Naive thymus-derived CD4-positive, alpha-beta T cell (primary cell): ENCODE measurements at regions of chr16 and their contacts with region 1.

Region 1: GRCh38 chr16:3023669-3024478 is at the starts of genes HCFC1R1 and THOC6:
- DNase-seq: peak; percentile 86 to 96 (median 96)
- ATAC-seq: peak; percentile 89
- H3K4me3 ChIP-seq: peak within 1 kb of the TSS; percentile 87
- H3K4me3 Mint-ChIP-seq: peak within 1 kb of the TSS; percentile 78 to 98 (median 92)
- H3K27ac ChIP-seq: peak within 1 kb of the TSS; percentile 98
- H3K27ac Mint-ChIP-seq: peak within 1 kb of the TSS; percentile 85 to 99 (median 96)
- H3K4me1 ChIP-seq: peaks cover 42 to 50% of the 10 kb centered on the region in 2 donors
- H3K4me1 Mint-ChIP-seq: peaks cover 15 to 62% (median 50%) of the 10 kb centered on the region in 7 donors
- H3K27me3 ChIP-seq: peaks cover 0 to under 1% of the 10 kb centered on the region in 2 donors
- H3K27me3 Mint-ChIP-seq: peaks cover 0 to 5% (median 2%) of the 10 kb centered on the region in 5 donors
- total RNA-seq, gene HCFC1R1: 11.5 to 29.6 (median 14.9) TPM
- total RNA-seq, gene THOC6: 25.3 to 55.5 (median 26.0) TPM

Region 2: DNA sequence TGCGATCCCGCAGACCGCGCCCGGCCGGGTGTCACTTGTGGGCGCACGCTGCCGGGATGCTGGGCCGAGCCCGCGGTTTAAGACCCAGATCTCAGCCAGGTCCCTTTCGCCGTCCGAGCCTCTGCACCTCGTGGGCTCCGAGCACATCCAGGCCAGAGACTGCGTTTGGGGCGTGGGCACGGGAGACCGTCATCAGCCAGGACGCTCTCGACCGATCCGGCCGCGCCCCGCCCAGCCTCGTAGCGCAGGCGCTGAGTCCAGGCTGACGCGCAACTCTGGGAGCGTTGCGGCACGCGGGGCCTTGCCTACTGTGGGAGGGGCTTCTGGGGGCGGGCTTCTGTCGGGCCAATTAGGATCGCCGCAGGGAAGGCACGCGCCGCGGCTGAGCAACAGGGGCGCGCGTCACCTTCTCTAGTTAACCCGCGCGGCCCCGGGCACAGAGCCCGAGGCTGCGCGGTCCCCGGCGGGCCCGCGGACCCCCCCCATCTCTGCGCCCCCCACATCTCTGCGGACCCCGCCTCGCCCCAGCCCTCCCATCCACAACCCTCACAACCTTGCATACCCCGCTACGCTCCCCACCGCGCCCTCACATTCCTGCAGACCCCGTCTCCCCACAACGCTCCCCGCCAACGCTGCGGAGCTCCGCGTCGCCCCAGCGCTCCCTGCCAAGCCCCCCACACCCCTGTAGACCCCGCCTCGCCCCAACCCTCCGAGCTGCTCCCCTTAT is 491.9 kb before region 1 on chr16:
- CTCF ChIA-PET with region 1: no interaction called
- POLR2A ChIA-PET with region 1: no interaction called
- intact Hi-C with region 1: loop called in 1 of 2 experiments (anchors 10 kb)
- DNase-seq: peak; percentile 94 to 97 (median 96)
- ATAC-seq: peak; percentile 93
- H3K4me3 ChIP-seq: peak overlapping the region; percentile 71
- H3K4me3 Mint-ChIP-seq: peak overlapping the region; percentile 84 to 100 (median 96)
- H3K27ac ChIP-seq: peak overlapping the region; percentile 93
- H3K27ac Mint-ChIP-seq: peak overlapping the region; percentile 96 to 100 (median 98)
- H3K4me1 ChIP-seq: peaks cover 5 to 7% of the 10 kb centered on the region in 2 donors
- H3K4me1 Mint-ChIP-seq: peaks cover 0 to 31% (median 20%) of the 10 kb centered on the region in 7 donors
- H3K27me3 ChIP-seq: no peaks in the 10 kb centered on the region
- H3K27me3 Mint-ChIP-seq: no peaks in the 10 kb centered on the region

Region 3: DNA sequence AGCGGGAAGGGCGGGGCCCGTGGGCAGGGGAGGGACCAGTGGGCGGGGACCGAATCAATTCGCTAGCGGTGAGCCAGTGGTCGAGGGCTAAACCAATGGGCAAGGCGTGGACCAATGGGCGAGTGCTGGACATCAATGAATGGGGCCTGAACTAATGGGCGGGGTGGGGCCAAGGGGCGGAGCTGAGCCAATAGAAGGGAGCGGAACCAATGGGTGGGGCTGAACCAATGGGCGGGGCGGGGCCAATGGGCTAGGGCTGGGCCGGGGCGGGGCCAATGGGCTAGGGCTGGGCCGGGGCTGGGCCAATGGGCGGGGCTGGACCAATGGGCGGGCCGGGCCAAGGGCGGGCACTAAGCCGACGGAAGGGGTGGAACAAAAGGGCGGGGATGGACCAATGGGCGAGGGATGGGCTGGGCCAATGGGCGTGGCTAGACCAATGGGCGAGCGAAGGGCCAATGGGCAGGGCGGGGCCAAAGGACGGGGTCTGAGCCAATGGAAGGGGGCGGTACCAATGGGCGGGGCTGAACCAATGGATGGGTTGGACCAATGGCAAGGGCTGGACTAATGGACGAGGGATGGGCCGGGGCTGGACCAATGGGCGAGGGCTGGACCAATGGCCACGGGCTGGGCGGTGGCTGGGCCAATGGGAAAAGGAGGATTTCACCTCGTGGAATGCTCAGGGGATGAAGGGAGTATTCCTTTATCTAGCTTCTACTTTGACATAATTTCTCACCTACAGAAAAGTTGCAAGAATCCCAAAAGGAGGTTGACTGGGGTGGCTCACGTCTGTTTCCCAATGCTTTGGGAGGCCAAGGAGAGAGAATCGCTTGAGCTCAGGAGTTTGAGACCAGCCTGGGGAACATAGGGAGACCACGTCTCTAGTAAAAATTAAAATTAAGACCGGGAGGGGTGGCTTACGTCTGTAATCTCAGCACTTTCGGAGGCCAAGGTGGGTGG is 118.2 kb before region 1 on chr16:
- CTCF ChIA-PET with region 1: no interaction called
- POLR2A ChIA-PET with region 1: no interaction called
- intact Hi-C with region 1: loop called (anchors 2 to 5 kb)
- DNase-seq: peak; percentile 75 to 98 (median 78)
- ATAC-seq: peak; percentile 91
- H3K4me3 ChIP-seq: peak overlapping the region; percentile 70
- H3K4me3 Mint-ChIP-seq: peak overlapping the region; percentile 89 to 98 (median 92)
- H3K27ac ChIP-seq: peak overlapping the region; percentile 62
- H3K27ac Mint-ChIP-seq: peak overlapping the region in 7 of 9 donors; percentile 14 to 88 (median 74)
- H3K4me1 ChIP-seq: peaks cover 7 to 12% of the 10 kb centered on the region in 2 donors
- H3K4me1 Mint-ChIP-seq: peaks cover 12 to 35% (median 28%) of the 10 kb centered on the region in 7 donors
- H3K27me3 ChIP-seq: no peaks in the 10 kb centered on the region
- H3K27me3 Mint-ChIP-seq: peaks cover 0 to 8% (median 0%) of the 10 kb centered on the region in 5 donors

Region 4: GRCh38 chr16:2980227-2981086 is 43.4 kb before region 1 on chr16 and contains the start of gene PKMYT1:
- CTCF ChIA-PET with region 1: no interaction called
- POLR2A ChIA-PET with region 1: interaction called, 3 read pairs
- intact Hi-C with region 1: loop called in 1 of 2 experiments (anchors 1 kb)
- DNase-seq: peak; percentile 86 to 100 (median 96)
- ATAC-seq: peak; percentile 97
- H3K4me3 ChIP-seq: peak within 1 kb of the TSS; percentile 73
- H3K4me3 Mint-ChIP-seq: peak within 1 kb of the TSS; percentile 72 to 91 (median 82)
- H3K27ac ChIP-seq: peak within 1 kb of the TSS; percentile 94
- H3K27ac Mint-ChIP-seq: peak within 1 kb of the TSS in 8 of 9 donors; percentile 65 to 89 (median 78)
- H3K4me1 ChIP-seq: peaks cover 5 to 6% of the 10 kb centered on the region in 2 donors
- H3K4me1 Mint-ChIP-seq: peaks cover 9 to 29% (median 14%) of the 10 kb centered on the region in 7 donors
- H3K27me3 ChIP-seq: no peaks in the 10 kb centered on the region
- H3K27me3 Mint-ChIP-seq: peaks cover 0 to 2% (median 0%) of the 10 kb centered on the region in 5 donors
- total RNA-seq, gene PKMYT1: 0.93 to 89.1 TPM in 2 of 5 experiments, not detected in the others

Region 5: DNA sequence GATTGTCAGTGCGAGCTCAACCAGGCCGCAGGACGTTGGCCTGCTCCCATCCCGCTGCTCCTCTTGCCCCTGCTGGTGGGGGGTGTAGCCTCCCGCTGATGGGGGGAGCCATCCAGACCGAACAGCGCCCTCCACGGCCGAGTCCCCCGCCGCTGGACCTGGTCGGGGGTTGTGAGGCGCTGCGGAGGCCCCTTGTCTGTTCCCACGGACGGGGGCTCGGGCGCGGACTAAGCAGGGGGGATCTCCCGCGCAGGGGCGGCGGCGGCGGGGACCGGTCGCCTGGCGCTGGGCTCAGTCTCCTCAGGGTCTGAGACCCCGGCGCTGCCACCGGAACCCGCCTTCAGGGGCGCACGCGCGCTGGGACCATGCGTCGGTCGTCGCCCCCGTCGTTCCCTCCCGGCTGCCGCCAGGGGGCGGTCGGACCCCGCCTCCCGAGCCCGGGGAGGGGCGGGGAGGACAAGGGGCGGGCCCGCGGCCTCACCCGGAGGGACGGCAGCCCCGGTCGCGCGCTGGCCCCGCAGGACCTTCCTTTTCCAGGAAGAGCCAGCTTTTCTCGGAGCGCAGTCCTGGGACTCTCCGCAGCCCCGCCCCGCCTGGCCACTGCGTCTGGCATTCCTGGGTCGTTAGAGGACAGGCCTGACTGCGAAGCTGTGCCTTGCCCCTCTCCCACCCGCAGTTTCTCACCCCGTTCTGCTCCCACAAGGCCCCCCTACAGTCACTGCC is 35.3 kb after region 1 on chr16:
- CTCF ChIA-PET with region 1: interaction called, 12 read pairs
- POLR2A ChIA-PET with region 1: interaction called, 4 read pairs
- intact Hi-C with region 1: no loop called
- DNase-seq: peak; percentile 76 to 97 (median 89)
- ATAC-seq: peak; percentile 95
- H3K4me3 ChIP-seq: peak overlapping the region; percentile 77
- H3K4me3 Mint-ChIP-seq: peak overlapping the region; percentile 79 to 95 (median 88)
- H3K27ac ChIP-seq: peak overlapping the region; percentile 89
- H3K27ac Mint-ChIP-seq: peak overlapping the region in 8 of 9 donors; percentile 72 to 91 (median 85)
- H3K4me1 ChIP-seq: peaks cover 25 to 46% of the 10 kb centered on the region in 2 donors
- H3K4me1 Mint-ChIP-seq: peaks cover 39 to 63% (median 47%) of the 10 kb centered on the region in 7 donors
- H3K27me3 ChIP-seq: no peaks in the 10 kb centered on the region
- H3K27me3 Mint-ChIP-seq: no peaks in the 10 kb centered on the region

Region 6: GRCh38 chr16:3129137-3130131 is 105.6 kb after region 1 on chr16:
- CTCF ChIA-PET with region 1: interaction called, 98 read pairs
- POLR2A ChIA-PET with region 1: interaction called, 10 read pairs
- intact Hi-C with region 1: loop called in 1 of 2 experiments (anchors 1 kb)
- DNase-seq: peak; percentile 53 to 92 (median 88)
- ATAC-seq: peak; percentile 91
- H3K4me3 ChIP-seq: peak overlapping the region; percentile 69
- H3K4me3 Mint-ChIP-seq: peak overlapping the region; percentile 73 to 97 (median 93)
- H3K27ac ChIP-seq: peak overlapping the region; percentile 72
- H3K27ac Mint-ChIP-seq: peak overlapping the region; percentile 38 to 96 (median 85)
- H3K4me1 ChIP-seq: peaks cover 27 to 36% of the 10 kb centered on the region in 2 donors
- H3K4me1 Mint-ChIP-seq: peaks cover 22 to 67% (median 55%) of the 10 kb centered on the region in 7 donors
- H3K27me3 ChIP-seq: no peaks in the 10 kb centered on the region
- H3K27me3 Mint-ChIP-seq: no peaks in the 10 kb centered on the region

Region 7: DNA sequence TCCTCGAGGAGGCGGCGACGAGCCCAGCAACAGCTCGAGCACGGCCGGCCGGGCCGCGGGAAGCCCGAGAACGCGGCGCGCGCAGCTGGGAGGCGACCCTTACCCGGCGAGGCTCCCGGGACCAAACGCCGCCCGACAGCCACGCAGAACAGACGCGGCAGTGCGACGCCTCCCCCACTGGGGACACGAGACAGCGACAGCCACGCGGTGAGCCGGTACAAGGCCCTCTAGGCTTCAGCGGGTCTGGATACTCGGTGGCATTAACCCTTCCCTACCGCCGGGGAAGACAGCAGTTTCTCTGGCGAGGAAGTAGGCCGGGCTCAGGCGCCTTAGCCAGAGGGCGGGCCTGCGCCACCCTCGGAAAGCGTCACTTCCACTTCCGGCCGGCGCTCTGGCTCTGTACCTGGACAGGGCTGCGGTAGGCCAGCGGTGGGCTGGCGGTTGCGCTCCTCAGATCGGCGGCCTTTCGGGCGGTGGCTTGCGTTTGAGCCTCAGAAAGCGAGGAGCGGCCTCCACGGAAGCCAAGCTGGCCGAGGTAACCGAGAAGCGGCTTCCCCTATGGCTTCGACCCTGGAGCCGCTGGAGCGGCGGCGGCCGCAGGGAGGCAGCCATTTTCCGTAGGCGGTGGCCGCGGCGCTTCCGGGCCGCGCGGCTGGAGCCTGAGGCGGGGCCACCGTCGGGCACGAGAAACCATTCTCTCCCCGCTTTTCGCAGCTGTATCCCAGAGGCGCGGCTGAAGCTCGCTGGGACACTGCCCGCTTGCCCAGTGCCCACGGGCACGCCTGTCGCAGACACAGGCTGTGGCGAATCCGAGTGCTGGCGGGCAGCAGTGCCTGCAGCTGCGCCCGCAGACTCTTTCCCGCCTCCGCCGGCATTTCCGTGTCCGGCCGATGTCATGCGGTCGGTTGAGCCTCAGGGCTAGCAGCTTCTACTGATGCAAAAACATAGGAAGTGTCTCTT is 281.5 kb after region 1 on chr16 and contains the starts of genes TIGD7 and ZNF75A:
- CTCF ChIA-PET with region 1: no interaction called
- POLR2A ChIA-PET with region 1: no interaction called
- intact Hi-C with region 1: no loop called
- DNase-seq: peak; percentile 69 to 89 (median 85)
- ATAC-seq: peak; percentile 96
- H3K4me3 ChIP-seq: peak within 1 kb of the TSS; percentile 78
- H3K4me3 Mint-ChIP-seq: peak within 1 kb of the TSS; percentile 78 to 87 (median 84)
- H3K27ac ChIP-seq: peak within 1 kb of the TSS; percentile 87
- H3K27ac Mint-ChIP-seq: peak within 1 kb of the TSS; percentile 62 to 92 (median 83)
- H3K4me1 ChIP-seq: peaks cover 12 to 13% of the 10 kb centered on the region in 2 donors
- H3K4me1 Mint-ChIP-seq: peaks cover 4 to 38% (median 19%) of the 10 kb centered on the region in 7 donors
- H3K27me3 ChIP-seq: no peaks in the 10 kb centered on the region
- H3K27me3 Mint-ChIP-seq: no peaks in the 10 kb centered on the region
- total RNA-seq, gene TIGD7: 4.9 to 18.4 (median 5.5) TPM
- total RNA-seq, gene ZNF75A: 27.7 to 90.6 (median 53.4) TPM

Region 8: DNA sequence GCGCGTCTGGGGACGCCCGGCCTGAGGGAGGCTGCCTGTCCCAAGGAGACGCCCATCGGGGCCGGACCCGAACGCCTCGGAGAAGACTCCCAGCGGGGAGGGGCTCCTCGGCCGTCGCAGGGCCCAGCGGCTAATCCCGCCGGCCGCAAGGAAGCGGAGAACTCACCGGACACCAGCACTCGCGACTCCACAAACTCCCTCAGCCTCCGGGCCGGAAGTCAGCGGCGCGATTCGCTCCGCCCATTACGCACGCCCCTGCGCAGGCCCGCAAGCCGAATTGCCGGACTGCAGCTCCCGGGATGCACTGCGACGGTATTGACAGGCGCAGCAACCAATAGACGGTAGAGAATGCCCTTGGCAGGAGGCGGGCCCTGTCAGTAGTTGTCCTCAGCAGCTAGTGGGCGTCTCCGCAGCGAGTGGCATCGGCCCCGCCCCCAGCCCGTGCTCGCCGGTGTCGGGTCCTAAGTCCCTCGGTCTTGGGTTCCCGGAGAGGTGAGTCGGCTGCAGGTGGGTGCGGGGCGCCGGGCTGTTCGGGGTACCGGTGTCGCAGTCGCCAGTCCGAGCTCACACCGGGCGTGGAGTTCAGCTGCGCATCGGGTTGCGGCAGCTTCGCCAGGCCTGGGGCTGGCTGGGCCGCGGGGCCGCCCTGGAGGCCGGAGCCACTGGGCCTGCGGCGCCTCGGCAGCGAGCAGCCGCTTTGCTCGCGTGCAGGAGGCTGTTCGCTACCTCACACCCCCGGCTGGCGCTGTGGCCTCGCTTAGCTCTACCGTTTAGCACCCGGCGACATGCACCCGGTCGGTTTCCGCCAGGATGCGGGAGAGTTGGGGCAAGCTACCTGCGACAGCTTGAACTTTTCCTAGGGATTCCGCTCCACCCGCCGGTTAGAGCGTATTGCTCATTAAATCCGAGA is 377.2 kb after region 1 on chr16 and contains the starts of genes ZNF174 and ZSCAN32:
- CTCF ChIA-PET with region 1: no interaction called
- POLR2A ChIA-PET with region 1: no interaction called
- intact Hi-C with region 1: loop called in 1 of 2 experiments (anchors 5 kb)
- DNase-seq: peak; percentile 90 to 99 (median 98)
- ATAC-seq: peak; percentile 99
- H3K4me3 ChIP-seq: peak within 1 kb of the TSS; percentile 87
- H3K4me3 Mint-ChIP-seq: peak within 1 kb of the TSS; percentile 84 to 97 (median 94)
- H3K27ac ChIP-seq: peak within 1 kb of the TSS; percentile 89
- H3K27ac Mint-ChIP-seq: peak within 1 kb of the TSS; percentile 88 to 95 (median 91)
- H3K4me1 ChIP-seq: peaks cover 20 to 22% of the 10 kb centered on the region in 2 donors
- H3K4me1 Mint-ChIP-seq: peaks cover 14 to 77% (median 65%) of the 10 kb centered on the region in 7 donors
- H3K27me3 ChIP-seq: no peaks in the 10 kb centered on the region
- H3K27me3 Mint-ChIP-seq: no peaks in the 10 kb centered on the region
- total RNA-seq, gene ZNF174: 4.7 to 22.8 (median 13.5) TPM
- total RNA-seq, gene ZSCAN32: 9.7 to 31.1 (median 19.0) TPM